Sigmoid colon (tissue), 7 donors: ENCODE measurements at regions of chrX and their contacts with region 1.

Region 1: DNA sequence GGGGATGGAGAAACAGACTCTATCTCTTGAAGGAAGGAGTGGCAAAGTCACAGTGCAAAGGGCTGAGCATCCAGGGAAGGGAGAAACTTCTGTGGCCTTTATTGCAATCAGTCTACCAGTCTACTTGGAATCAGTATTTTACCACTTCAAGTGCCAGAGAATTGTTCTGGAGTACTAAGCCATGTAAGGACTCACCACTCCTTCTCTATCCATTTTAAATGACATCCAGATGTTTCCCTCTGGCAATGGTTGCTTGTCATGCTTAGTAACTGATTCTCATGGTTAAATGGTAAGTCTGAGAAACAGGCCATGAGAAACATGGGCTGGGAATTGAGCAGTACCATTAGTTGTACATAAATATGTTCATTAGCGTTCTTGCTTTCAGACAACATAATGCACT is 21.1 kb upstream of the SMIM10 start:
- DNase-seq: no peak
- H3K4me3 ChIP-seq: no peak overlapping the region
- H3K27ac ChIP-seq: no peak overlapping the region
- H3K4me1 ChIP-seq: no peaks in the 10 kb centered on the region
- H3K27me3 ChIP-seq: no peaks in the 10 kb centered on the region
- CTCF ChIP-seq: no peak
- EP300 ChIP-seq: no peak
- POLR2A ChIP-seq: no peak

Region 2: GRCh38 chrX:135003876-135004623 is 34.3 kb after region 1 on chrX:
- intact Hi-C with region 1: loop called (anchors 1 kb)
- DNase-seq: peak; percentile 94
- H3K4me3 ChIP-seq: peak overlapping the region in 3 of 4 donors; percentile 35 to 47 (median 46)
- H3K27ac ChIP-seq: peak overlapping the region; percentile 53 to 62 (median 60)
- H3K4me1 ChIP-seq: no peaks in the 10 kb centered on the region
- H3K27me3 ChIP-seq: no peaks in the 10 kb centered on the region
- CTCF ChIP-seq: no peak
- EP300 ChIP-seq: no peak
- POLR2A ChIP-seq: no peak

Region 3: DNA sequence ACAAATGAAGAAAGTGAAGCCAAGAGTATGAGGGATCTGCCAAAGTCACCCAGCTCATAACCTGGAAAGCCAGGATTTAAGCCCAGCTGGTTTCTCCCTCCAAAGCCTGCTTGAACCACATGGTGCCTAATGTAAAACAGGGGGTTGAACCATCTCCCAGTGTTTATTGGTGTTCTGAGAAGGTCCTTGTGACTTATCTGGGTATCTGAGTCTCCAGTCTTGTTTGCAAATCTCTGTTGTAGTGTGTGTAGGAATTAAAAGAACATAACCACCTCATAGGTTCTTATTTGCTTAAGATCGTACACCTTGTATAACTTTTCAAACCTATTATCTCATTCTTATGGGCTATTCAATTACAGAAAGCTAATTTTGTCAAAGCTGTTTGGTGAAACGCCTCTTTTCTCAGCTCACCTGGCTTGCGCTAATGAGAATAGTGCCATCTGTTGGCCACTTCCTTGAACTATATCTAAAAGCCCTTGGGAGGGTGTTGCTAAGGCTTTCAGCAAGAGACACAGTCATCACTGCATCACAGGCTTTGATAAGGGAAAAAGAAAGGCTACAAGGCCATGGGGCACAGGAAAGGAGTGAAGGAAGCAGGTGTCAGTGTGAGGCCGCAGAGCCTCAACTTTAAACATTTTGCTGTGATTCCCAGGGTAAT is 116.6 kb after region 1 on chrX:
- intact Hi-C with region 1: loop called (anchors 2 kb)
- DNase-seq: no peak
- H3K4me3 ChIP-seq: no peak overlapping the region
- H3K27ac ChIP-seq: no peak overlapping the region
- H3K4me1 ChIP-seq: no peaks in the 10 kb centered on the region
- H3K27me3 ChIP-seq: no peaks in the 10 kb centered on the region
- CTCF ChIP-seq: peak in 3 of 4 experiments; percentile 17 to 43 (median 28)
- EP300 ChIP-seq: no peak
- POLR2A ChIP-seq: no peak